HepG2 (cell line): ENCODE measurements at regions of chr2 and their contacts with region 1.

Region 1: GRCh38 chr2:137111896-137112295 is 346.6 kb downstream of the THSD7B start:
- DNase-seq: no peak
- ATAC-seq: no peak
- H3K4me3 ChIP-seq: no peak overlapping the region
- H3K27ac ChIP-seq: no peak overlapping the region
- H3K4me1 ChIP-seq: no peaks in the 10 kb centered on the region
- H3K27me3 ChIP-seq: no peaks in the 10 kb centered on the region; a peak in 1 of 5 replicates
- CTCF ChIP-seq: no peak
- EP300 ChIP-seq: no peak
- POLR2A ChIP-seq: no peak
- RAD21 ChIP-seq: no peak

Region 2: GRCh38 chr2:136874258-136874657 is 237.6 kb before region 1 on chr2:
- CTCF ChIA-PET with region 1: no interaction called
- POLR2A ChIA-PET with region 1: no interaction called
- in situ Hi-C with region 1: no loop called
- intact Hi-C with region 1: loop called (anchors 5 kb)
- DNase-seq: peak; percentile 11
- ATAC-seq: peak; percentile 64
- H3K4me3 ChIP-seq: no peak overlapping the region
- H3K27ac ChIP-seq: no peak overlapping the region
- H3K4me1 ChIP-seq: no peaks in the 10 kb centered on the region
- H3K27me3 ChIP-seq: no peaks in the 10 kb centered on the region
- CTCF ChIP-seq: peak; percentile 51
- EP300 ChIP-seq: no peak
- POLR2A ChIP-seq: no peak
- RAD21 ChIP-seq: no peak

Region 3: GRCh38 chr2:137202318-137202717 is 90.4 kb after region 1 on chr2:
- CTCF ChIA-PET with region 1: no interaction called
- POLR2A ChIA-PET with region 1: no interaction called
- in situ Hi-C with region 1: no loop called
- intact Hi-C with region 1: no loop called
- DNase-seq: no peak
- ATAC-seq: no peak
- H3K4me3 ChIP-seq: no peak overlapping the region
- H3K27ac ChIP-seq: no peak overlapping the region
- H3K4me1 ChIP-seq: no peaks in the 10 kb centered on the region
- H3K27me3 ChIP-seq: no peaks in the 10 kb centered on the region
- CTCF ChIP-seq: no peak
- EP300 ChIP-seq: no peak
- POLR2A ChIP-seq: no peak
- RAD21 ChIP-seq: no peak